AG04449 (cell line): ENCODE measurements at regions of chr1 and their contacts with region 1.

Region 1: GRCh38 chr1:117051224-117052064 is 8.7 kb upstream of the TTF2 start:
- DNase-seq: no peak
- H3K4me3 ChIP-seq: no peak overlapping the region
- CTCF ChIP-seq: no peak

Region 2: DNA sequence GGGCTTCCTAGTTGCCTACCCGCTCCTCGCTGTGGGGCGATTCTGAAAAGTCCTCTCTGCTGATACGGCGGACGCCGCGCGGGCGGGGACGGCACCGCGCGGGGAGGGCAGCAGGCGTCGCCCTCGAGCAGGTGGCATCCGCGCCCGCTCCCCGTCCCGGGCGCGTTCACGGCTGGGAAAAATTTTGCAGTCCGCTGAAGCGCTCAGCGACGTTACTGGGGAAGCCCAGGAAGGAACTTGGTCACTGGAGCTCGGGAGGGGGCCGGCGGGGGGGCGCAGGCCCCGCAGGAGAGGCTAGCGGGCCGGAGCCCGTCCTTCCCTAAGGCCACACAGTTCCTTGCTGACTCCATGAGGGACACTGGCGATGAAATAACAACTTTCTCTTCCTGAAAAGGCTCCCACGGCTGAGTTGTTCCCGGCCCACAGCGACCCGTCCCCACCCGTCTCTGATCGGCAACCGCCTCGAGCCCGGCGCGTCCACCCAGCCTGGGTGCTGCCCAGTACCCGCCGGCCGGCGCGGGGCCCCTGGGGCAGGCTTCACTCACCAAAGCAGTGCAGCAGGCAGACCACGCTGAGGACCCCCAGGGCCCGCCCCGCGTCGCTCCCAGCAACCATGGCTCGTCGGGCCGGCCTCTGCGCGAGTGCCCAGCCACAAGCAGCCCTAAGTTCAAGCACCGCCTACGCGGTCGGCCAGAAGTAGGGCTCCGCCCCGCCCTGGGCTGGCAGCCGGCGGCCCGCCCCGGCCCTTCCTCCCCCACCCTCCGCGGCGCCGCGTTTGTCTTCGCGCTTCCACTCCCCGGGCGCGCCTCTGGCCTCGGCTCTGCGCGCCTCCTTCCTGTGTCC is 480.9 kb before region 1 on chr1 and contains the start of gene CD58:
- CTCF ChIA-PET with region 1: interaction called, 11 read pairs
- POLR2A ChIA-PET with region 1: no interaction called
- DNase-seq: no peak
- H3K4me3 ChIP-seq: peak within 1 kb of the TSS; percentile 73
- CTCF ChIP-seq: peak; percentile 79

Region 3: GRCh38 chr1:116724765-116725375 is 326.6 kb before region 1 on chr1:
- CTCF ChIA-PET with region 1: interaction called, 90 read pairs
- POLR2A ChIA-PET with region 1: no interaction called
- DNase-seq: no peak
- H3K4me3 ChIP-seq: no peak overlapping the region
- CTCF ChIP-seq: peak; percentile 62

Region 4: GRCh38 chr1:116737020-116737854 is 314.2 kb before region 1 on chr1:
- CTCF ChIA-PET with region 1: interaction called, 59 read pairs
- POLR2A ChIA-PET with region 1: no interaction called
- DNase-seq: no peak
- H3K4me3 ChIP-seq: no peak overlapping the region
- CTCF ChIP-seq: peak; percentile 77

Region 5: DNA sequence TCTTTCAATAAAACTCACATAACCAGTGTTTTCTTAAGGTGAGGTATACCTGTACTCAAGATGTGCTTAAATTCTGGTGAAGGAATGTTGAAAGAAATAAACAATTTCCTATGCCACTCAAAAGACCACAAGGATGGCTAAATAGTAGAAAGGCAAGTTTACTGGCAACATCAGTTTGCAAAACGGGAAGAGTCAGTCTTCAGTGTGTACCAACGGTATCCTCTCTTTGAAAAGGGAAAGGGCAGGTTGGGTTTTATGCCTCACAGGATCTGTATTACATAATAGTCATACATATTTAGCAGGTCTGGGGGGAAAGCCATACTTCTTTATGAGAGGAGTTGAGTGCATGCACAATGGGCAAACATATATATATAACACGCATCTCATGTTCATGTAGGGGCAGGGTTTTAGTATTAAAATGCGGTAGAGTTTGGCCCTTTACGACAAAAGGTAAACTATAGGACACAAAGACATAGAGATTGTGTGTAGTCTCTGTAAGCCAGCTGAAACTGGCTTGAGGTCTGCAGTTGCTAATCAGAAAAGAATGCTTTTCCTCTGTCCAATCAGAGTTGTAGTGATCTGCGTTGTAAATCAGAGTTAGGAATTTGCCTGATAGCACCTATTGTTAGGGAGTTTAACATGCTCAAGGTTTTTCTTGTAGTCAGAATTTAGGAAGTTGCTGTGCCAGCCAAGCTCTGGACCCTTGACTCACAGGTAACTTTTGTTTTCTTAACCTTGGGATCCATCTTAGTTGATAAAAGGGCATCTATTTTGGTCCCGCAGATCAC is 220.3 kb after region 1 on chr1:
- CTCF ChIA-PET with region 1: no interaction called
- POLR2A ChIA-PET with region 1: no interaction called
- DNase-seq: no peak
- H3K4me3 ChIP-seq: no peak overlapping the region
- CTCF ChIP-seq: no peak